Adrenal gland (tissue), 19 donors: ENCODE measurements at regions of chr6 and their contacts with region 1.

Region 1: DNA sequence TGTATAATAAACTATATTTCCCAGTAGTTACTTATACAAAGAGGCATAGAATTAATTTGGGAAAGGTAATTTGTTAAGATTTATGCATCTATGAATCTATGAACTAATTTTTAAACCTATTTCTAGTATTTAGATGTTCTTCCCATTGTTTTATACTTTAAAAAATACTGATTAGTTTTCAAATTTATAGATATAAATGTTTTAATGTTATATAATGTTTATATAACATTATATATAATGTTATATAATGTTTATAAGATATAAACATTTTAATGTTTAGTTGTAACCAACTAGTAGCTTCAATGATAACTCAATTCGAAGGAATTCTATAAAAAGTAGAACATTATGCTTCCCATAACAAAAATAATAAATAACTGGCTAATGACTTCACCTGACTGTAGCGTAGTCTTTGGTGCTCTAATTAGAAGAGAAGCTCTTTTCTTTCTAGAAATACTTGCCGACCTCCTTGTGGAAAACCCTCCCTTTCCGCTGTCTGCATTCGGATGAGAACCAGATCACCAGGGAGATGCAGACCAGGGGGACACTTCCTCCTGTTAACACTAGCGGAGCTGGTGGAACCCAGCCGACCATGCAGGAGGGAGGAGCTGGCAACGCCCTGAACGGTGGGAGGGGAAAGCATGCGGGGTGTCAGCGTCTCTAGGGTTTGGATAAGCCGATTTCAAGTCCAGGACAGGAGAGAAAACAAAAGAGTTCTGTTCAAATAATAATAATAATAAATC is 158.4 kb downstream of the OR2B2 start:
- DNase-seq: peak; percentile 33 to 64 (median 56)
- H3K4me3 ChIP-seq: peak overlapping the region in 1 of 4 donors; percentile 60
- H3K27ac ChIP-seq: no peak overlapping the region
- H3K4me1 ChIP-seq: peaks cover 0 to 8% of the 10 kb centered on the region in 2 donors
- H3K27me3 ChIP-seq: peaks cover 10% of the 10 kb centered on the region
- CTCF ChIP-seq: no peak
- POLR2A ChIP-seq: no peak

Region 2: DNA sequence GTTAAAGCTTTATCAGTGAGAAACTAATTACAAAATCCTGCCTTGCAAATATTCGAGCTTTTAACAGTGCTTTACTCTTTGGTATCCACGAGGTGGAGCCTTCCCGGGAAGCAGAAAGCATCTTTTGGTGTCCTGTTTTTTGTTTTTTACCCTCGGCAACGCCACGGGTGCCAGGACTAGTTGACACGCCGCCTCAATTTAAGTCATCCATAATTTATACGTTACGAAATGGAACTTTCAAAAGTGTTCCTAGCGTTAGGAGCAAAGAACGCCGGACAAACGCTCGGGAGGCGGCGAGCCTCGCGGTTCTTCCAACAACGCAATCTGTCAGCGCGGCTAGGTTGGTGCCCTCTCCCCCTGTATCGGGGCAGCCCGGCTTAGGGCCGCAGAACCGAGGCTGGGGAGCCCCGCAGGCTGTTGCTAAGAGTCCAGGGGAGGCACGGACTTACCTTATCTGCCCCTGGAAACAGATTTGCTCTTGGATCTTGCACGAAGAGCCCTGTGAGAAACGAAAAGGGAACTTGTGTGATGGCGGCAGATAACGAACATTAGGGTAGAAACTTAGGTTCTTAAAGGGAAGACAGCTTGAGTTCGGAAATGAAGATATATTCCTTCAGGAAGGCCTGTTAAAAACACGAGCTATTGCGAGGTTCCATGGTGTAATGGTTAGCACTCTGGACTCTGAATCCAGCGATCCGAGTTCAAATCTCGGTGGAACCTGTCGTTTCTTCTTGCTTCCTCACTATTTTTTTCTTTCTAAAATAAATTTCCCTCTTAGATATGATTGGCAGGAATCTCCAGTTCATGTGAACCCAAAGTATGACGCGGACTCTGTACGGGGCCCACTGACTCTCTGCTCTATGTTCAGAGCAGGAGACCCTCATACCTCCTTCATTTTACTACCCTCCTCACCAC is 234.7 kb before region 1 on chr6:
- intact Hi-C with region 1: loop called in 1 of 2 experiments (anchors 10 kb)
- DNase-seq: peak; percentile 58 to 86 (median 66)
- H3K4me3 ChIP-seq: peak overlapping the region in 3 of 4 donors; percentile 0 to 66 (median 66)
- H3K27ac ChIP-seq: peak overlapping the region in 4 of 5 donors; percentile 61 to 88 (median 88)
- H3K4me1 ChIP-seq: peaks cover 0 to 8% of the 10 kb centered on the region in 2 donors
- H3K27me3 ChIP-seq: no peaks in the 10 kb centered on the region
- CTCF ChIP-seq: peak; percentile 46 to 78 (median 64)
- POLR2A ChIP-seq: peak in 1 of 2 donors; percentile 12